Common myeloid progenitor, CD34-positive (primary cell): ENCODE measurements at regions of chr2 and their contacts with region 1.

Region 1: DNA sequence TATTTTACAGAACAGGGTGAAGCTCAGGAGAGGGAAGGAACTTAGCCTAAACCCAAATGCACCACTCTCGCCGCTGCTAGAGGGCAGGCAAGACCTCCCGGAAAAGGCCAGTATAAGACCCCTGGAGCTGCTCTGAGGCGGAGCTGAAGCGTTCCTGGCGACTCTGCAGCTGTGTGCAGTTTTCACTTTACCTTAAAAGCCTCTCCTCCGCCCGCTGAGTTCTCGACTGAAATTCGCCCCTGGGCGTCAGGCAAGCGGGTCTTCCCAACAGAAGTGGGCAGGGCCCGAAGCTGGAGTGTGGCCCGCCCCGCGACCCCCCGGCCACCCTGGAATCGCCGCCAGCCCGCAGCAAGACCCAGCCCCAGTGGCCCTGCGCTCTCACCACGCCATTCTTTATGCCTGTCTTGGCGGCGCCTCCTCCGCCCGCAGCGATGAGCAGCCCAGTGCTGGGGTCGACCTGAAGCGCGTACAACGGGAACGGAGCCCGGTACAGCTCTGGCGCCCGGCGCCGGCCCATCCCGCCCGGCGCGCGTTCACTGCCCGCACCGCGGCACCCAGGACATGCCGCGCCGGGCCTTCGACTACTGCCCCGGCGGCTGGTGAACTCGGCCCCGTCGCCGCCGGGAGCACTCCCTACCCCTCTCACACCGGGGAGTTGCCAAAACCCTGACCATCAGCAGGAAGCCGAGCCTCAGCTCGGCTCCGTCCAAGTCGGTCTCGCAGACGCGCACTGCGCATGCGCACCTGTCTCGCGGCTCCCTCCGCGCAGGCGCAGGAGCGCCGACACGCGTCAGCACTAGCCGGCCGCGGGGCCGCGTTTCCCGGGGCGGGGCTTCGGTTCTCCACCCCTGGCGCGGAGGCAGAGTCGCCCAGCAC is at the start of gene PREB:
- DNase-seq: peak; percentile 93 to 96 (median 94)
- H3K4me3 ChIP-seq: peak within 1 kb of the TSS; percentile 58 to 96 (median 90)
- H3K27ac ChIP-seq: peak within 1 kb of the TSS; percentile 75 to 84
- H3K4me1 ChIP-seq: peaks cover 5 to 21% (median 18%) of the 10 kb centered on the region in 4 experiments
- H3K27me3 ChIP-seq: no peaks in the 10 kb centered on the region

Region 2: GRCh38 chr2:27102329-27102728 is 31.8 kb before region 1 on chr2:
- CTCF ChIA-PET with region 1: interaction called, 16 read pairs
- POLR2A ChIA-PET with region 1: no interaction called
- DNase-seq: no peak
- H3K4me3 ChIP-seq: no peak overlapping the region
- H3K27ac ChIP-seq: no peak overlapping the region
- H3K4me1 ChIP-seq: no peaks in the 10 kb centered on the region
- H3K27me3 ChIP-seq: no peaks in the 10 kb centered on the region

Region 3: DNA sequence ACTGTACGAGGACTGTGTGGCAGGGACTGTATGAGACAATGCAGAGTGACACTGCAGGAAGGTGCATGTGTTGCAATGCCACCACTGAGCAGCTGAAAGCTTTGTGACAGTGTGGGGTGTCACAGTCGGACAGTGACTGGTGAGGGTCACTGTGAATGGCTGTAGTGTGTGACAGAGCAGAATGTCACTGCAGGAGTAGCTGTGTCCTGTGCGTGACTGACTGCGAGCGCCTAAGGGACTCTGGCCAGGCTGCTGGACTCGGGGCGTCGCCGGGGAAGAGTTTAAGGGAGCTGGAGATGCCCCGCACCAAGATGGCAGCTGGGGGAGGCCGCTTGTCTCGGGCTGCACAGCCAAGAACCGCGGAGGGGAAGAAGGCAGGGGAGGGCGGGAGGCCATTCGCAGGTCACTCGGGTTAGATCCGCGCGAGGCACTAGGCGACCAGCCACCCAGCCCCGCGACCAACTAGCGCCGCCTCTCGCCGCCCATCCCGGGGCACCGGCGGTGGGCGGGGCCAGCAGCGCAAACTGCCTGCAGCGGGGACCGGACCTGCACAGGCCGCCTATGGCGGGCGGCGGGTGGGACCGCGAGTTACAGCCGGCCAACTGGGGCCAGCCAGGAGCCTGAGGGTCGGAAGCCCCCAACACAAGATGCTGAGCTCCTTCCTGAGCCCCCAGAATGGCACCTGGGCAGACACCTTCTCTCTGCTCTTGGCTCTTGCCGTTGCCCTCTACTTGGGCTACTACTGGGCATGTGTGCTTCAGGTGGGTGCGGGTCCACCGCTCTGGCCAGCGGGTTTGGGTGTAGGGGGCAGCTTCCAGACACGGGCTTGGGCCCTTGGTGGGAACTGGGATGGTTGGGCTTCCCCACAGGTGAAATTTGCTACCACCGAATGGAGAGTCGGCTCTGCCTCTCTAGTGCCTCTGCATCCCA is 10.6 kb before region 1 on chr2 and contains the start of gene ABHD1:
- CTCF ChIA-PET with region 1: interaction called, 31 read pairs
- POLR2A ChIA-PET with region 1: interaction called, 8 read pairs
- DNase-seq: peak; percentile 52 to 79 (median 66)
- H3K4me3 ChIP-seq: peak within 1 kb of the TSS; percentile 59 to 86 (median 74)
- H3K27ac ChIP-seq: no peak within 1 kb of the TSS
- H3K4me1 ChIP-seq: peaks cover 0 to 26% (median 20%) of the 10 kb centered on the region in 4 experiments
- H3K27me3 ChIP-seq: peaks cover 0 to 20% (median 0%) of the 10 kb centered on the region in 5 experiments

Region 4: GRCh38 chr2:27202854-27203253 is 68.7 kb after region 1 on chr2:
- CTCF ChIA-PET with region 1: no interaction called
- POLR2A ChIA-PET with region 1: no interaction called
- DNase-seq: no peak
- H3K4me3 ChIP-seq: no peak overlapping the region
- H3K27ac ChIP-seq: no peak overlapping the region
- H3K4me1 ChIP-seq: no peaks in the 10 kb centered on the region
- H3K27me3 ChIP-seq: no peaks in the 10 kb centered on the region